OCI-LY7 (cell line): ENCODE measurements at regions of chrX and their contacts with region 1.

Region 1: GRCh38 chrX:79146640-79147390 is 2.3 kb downstream of the GPR174 start:
- DNase-seq: peak; percentile 32
- H3K4me3 ChIP-seq: peak overlapping the region; percentile 73
- H3K27ac ChIP-seq: peak overlapping the region; percentile 77
- H3K4me1 ChIP-seq: peaks cover 48% of the 10 kb centered on the region
- CTCF ChIP-seq: no peak

Region 2: GRCh38 chrX:77975801-77976200 is 1171.0 kb before region 1 on chrX:
- CTCF ChIA-PET with region 1: no interaction called
- POLR2A ChIA-PET with region 1: no interaction called
- intact Hi-C with region 1: no loop called
- DNase-seq: no peak
- H3K4me3 ChIP-seq: no peak overlapping the region
- H3K27ac ChIP-seq: no peak overlapping the region
- H3K4me1 ChIP-seq: no peaks in the 10 kb centered on the region
- CTCF ChIP-seq: no peak

Region 3: DNA sequence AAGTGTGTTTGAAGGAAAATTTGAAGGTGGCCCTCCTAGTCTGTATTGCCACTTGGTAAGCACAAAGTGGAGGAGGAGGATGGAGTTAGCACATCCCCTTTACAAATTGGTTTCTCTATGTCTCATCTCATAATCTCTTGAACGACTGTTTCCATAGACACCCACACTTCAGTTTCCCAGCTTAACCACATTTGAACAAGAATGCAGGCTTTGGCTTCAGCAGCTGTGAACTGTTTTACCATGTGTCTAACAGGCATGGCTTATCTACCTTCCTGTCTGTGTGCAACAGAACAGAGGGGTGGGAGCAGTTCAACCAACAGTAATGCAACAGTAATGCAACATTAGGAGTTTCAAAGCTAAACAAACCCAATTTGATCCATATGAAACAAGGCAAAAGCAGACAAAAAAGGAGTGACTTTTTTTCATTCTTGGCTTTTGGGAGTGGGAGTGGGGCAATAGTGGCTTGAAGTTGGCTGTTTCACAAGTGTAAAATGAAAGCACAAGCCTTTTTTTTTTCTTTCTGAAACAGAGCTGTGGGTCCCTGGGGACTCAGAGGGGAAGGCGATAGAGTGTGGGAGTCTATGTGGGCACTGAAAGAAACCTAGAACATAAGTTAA is 112.4 kb after region 1 on chrX:
- CTCF ChIA-PET with region 1: no interaction called
- POLR2A ChIA-PET with region 1: interaction called, 8 read pairs
- intact Hi-C with region 1: loop called (anchors 2 kb)
- DNase-seq: peak; percentile 78
- H3K4me3 ChIP-seq: peak overlapping the region; percentile 30
- H3K27ac ChIP-seq: peak overlapping the region; percentile 72
- H3K4me1 ChIP-seq: peaks cover 22% of the 10 kb centered on the region
- CTCF ChIP-seq: no peak